Activated CD4-positive, alpha-beta T cell treated with anti-CD3 and anti-CD28 coated beads for 36 hours (primary cell): ENCODE measurements at regions of chr11 and their contacts with region 1.

Region 1: DNA sequence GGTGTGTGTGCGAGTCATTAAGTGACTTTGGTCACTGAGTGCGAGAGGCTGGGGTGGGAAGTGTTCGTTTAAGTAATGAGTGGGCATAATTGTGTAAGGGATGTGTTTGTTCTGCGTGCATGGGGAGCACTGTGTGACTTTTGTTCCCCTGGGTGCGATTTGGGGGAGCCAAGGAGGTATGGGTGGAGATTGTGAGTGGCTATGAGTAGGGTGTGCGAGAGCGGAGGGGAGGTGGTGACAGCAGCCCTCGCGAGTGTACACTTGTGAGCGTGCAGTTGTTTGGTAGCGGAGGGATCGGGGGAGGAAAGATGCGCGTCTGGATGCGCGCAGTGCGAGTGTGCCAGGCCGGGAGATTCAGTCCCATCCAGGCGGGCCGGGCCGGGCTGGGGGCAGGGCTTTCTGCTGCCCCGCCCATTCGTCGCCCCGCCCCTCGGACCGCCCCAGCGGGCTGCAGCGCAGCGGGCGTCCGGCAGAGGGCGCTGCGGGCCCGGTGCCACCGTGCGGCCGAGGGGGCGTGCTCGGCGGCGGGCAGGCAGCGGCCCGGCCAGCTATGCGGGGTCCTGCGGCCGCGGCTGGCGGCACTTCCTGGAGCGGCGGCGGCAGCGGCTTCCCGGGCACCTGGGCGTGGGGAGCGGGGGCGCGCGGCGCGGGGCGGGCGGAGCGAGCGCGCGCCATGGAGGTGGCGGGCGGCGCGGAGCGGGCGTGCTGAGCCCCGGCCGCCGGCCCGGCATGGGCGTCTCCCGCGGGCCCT is at the start of gene DGKZ:
- DNase-seq: peak; percentile 93
- ATAC-seq: peak; percentile 66
- H3K4me3 Mint-ChIP-seq: peak within 1 kb of the TSS; percentile 90
- H3K27ac Mint-ChIP-seq: peak within 1 kb of the TSS; percentile 96
- H3K4me1 Mint-ChIP-seq: peaks cover 81% of the 10 kb centered on the region
- H3K27me3 Mint-ChIP-seq: no peaks in the 10 kb centered on the region
- total RNA-seq, gene DGKZ: 87.6 to 101 TPM

Region 2: DNA sequence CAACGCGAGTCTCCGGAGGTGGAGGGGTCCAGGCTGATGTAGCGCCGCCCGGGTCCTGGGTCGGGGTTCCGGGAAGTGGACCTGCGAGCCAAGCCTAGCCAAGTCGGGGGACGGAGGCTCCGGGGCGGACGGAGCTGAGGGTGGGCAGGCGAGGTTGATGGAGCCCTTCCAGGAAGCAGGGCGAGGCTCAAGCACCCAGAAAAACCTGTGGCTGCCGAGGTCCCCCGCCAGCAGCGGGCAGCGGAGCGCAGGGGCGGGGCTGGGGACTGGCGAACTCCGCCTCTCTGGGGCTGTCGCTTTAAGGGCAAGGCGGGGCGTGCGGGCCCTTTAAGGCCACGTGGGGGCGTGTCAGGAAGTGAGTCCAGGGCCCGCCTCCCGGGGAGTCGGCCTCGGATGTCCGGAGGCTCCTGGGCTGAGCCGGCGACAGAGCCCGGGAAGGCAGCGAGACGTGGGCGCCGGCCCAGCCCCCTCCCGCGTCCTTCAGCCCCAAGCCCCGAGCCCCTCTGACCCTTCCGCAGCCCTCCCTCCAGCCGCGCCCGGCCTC is 542.2 kb before region 1 on chr11 and contains the start of gene SLC35C1:
- CTCF ChIA-PET with region 1: no interaction called
- POLR2A ChIA-PET with region 1: no interaction called
- intact Hi-C with region 1: loop called in 1 of 2 experiments (anchors 1 kb)
- DNase-seq: peak; percentile 98
- ATAC-seq: peak; percentile 97
- H3K4me3 Mint-ChIP-seq: peak within 1 kb of the TSS; percentile 91
- H3K27ac Mint-ChIP-seq: peak within 1 kb of the TSS; percentile 86
- H3K4me1 Mint-ChIP-seq: peaks cover 42% of the 10 kb centered on the region
- H3K27me3 Mint-ChIP-seq: no peaks in the 10 kb centered on the region
- total RNA-seq, gene SLC35C1: 9.6 to 9.8 TPM

Region 3: DNA sequence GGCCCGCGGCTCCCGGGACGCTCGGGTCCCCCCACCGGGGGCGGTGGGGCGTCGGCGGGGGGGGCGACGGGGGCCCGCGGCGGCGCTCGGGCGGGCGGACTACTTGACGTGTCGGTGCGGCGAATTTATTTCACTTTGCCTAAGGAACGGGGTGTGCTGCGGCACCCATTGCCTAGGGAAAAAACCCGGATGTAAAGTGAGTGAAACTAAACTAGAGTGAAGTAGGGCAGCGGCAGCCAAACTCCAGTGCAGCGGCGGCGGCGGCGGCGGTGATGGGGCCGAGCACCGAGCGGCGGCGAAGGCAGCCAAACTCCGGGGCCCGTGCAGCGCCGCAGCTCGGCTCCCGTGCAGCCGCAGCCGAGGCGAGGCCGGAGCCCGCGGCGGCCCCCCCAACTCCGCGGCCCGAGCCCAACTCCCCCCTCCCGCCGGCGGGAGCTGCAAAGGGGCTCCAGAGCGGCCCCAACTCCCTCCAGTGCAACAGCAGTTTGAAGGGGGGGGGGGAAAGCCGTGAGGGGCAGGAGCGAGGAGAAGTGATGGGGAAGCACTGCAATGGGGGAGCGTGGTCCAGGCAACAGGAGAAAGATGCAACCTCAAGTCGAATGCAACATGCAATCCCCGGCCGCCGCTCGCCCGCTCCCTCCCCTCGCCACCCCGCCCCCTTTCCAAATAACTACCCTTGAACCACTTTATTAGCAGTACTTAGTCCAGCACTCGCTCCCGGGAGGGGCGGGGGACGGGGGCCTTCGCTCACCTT is 225.2 kb before region 1 on chr11:
- CTCF ChIA-PET with region 1: interaction called, 3 read pairs
- POLR2A ChIA-PET with region 1: no interaction called
- intact Hi-C with region 1: loop called (anchors 1 to 5 kb)
- DNase-seq: peak; percentile 83
- ATAC-seq: peak; percentile 39
- H3K4me3 Mint-ChIP-seq: peak overlapping the region; percentile 81
- H3K27ac Mint-ChIP-seq: peak overlapping the region; percentile 86
- H3K4me1 Mint-ChIP-seq: peaks cover 41% of the 10 kb centered on the region
- H3K27me3 Mint-ChIP-seq: no peaks in the 10 kb centered on the region

Region 4: GRCh38 chr11:46332568-46333393 is 14.3 kb before region 1 on chr11:
- CTCF ChIA-PET with region 1: interaction called, 139 read pairs
- POLR2A ChIA-PET with region 1: interaction called, 5 read pairs
- intact Hi-C with region 1: loop called (anchors 1 to 2 kb)
- DNase-seq: peak; percentile 75
- ATAC-seq: peak; percentile 18
- H3K4me3 Mint-ChIP-seq: peak overlapping the region; percentile 71
- H3K27ac Mint-ChIP-seq: peak overlapping the region; percentile 3
- H3K4me1 Mint-ChIP-seq: peaks cover 72% of the 10 kb centered on the region
- H3K27me3 Mint-ChIP-seq: no peaks in the 10 kb centered on the region

Region 5: GRCh38 chr11:46380340-46381047 is 33.4 kb after region 1 on chr11:
- CTCF ChIA-PET with region 1: interaction called, 11 read pairs
- POLR2A ChIA-PET with region 1: no interaction called
- intact Hi-C with region 1: loop called (anchors 1 to 5 kb)
- DNase-seq: peak; percentile 90
- ATAC-seq: peak; percentile 65
- H3K4me3 Mint-ChIP-seq: peak overlapping the region; percentile 72
- H3K27ac Mint-ChIP-seq: peak overlapping the region; percentile 58
- H3K4me1 Mint-ChIP-seq: peaks cover 8% of the 10 kb centered on the region
- H3K27me3 Mint-ChIP-seq: peaks cover 8% of the 10 kb centered on the region

Region 6: DNA sequence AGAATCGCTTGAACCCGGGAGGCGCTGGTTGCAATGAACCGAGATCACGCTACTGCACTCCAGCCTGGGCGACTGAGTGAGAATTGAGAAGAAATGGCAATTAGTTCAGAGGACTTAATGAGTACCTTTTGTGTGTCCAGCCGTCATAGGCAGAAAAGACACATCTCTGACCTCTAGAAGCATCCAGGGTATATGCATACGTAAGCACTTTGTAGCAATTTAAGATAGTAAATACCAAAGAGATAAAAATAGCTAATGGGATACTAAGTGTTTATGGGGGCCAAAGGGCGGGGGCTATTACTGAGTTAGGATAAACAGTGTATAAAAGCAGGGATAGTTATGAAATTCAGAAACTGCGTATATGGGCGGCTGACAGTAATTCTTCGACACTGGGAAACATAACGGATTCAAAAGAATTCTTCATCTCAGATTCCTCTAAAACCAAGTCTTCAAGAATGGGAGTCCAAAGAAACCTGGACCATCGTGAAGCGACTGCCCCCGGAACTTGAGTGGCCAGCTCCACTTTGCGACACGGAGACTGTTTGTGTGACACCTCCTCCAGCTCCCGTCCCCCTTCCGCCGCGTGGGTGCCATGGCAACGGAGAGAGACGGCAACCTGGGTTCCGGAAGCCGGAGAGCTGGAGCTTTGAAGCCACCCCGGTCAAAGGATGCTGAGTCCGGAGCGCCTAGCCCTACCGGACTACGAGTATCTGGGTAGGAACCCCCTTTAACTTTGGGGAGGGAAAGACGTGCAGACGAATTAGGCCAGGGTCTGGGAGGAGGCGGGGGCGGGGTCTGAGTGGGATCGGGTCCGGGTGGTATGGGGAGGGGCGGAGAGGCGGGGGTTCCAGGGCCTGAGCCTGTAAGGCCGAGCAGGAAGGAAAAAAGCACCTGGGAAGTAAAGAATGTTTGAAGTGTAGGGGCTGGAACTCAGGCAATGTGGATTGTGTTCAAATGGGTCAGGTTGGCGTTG is 589.4 kb after region 1 on chr11 and contains the start of gene CSTPP1:
- CTCF ChIA-PET with region 1: no interaction called
- POLR2A ChIA-PET with region 1: no interaction called
- intact Hi-C with region 1: loop called in 1 of 2 experiments (anchors 5 kb)
- DNase-seq: peak; percentile 97
- ATAC-seq: peak; percentile 96
- H3K4me3 Mint-ChIP-seq: peak within 1 kb of the TSS; percentile 86
- H3K27ac Mint-ChIP-seq: peak within 1 kb of the TSS; percentile 88
- H3K4me1 Mint-ChIP-seq: peaks cover 16% of the 10 kb centered on the region
- H3K27me3 Mint-ChIP-seq: peaks cover 5% of the 10 kb centered on the region
- total RNA-seq, gene CSTPP1: 17.9 to 18.6 TPM

Region 7: GRCh38 chr11:47426061-47426956 is 1079.2 kb after region 1 on chr11 and contains the start of gene PSMC3:
- CTCF ChIA-PET with region 1: no interaction called
- POLR2A ChIA-PET with region 1: no interaction called
- intact Hi-C with region 1: loop called in 1 of 2 experiments (anchors 10 kb)
- DNase-seq: peak; percentile 100
- ATAC-seq: peak; percentile 98
- H3K4me3 Mint-ChIP-seq: peak within 1 kb of the TSS; percentile 100
- H3K27ac Mint-ChIP-seq: peak within 1 kb of the TSS; percentile 100
- H3K4me1 Mint-ChIP-seq: peaks cover 24% of the 10 kb centered on the region
- H3K27me3 Mint-ChIP-seq: no peaks in the 10 kb centered on the region
- total RNA-seq, gene PSMC3: 147 to 167 TPM